HCT116 (cell line): ENCODE measurements at regions of chr2 and their contacts with region 1.

Region 1: DNA sequence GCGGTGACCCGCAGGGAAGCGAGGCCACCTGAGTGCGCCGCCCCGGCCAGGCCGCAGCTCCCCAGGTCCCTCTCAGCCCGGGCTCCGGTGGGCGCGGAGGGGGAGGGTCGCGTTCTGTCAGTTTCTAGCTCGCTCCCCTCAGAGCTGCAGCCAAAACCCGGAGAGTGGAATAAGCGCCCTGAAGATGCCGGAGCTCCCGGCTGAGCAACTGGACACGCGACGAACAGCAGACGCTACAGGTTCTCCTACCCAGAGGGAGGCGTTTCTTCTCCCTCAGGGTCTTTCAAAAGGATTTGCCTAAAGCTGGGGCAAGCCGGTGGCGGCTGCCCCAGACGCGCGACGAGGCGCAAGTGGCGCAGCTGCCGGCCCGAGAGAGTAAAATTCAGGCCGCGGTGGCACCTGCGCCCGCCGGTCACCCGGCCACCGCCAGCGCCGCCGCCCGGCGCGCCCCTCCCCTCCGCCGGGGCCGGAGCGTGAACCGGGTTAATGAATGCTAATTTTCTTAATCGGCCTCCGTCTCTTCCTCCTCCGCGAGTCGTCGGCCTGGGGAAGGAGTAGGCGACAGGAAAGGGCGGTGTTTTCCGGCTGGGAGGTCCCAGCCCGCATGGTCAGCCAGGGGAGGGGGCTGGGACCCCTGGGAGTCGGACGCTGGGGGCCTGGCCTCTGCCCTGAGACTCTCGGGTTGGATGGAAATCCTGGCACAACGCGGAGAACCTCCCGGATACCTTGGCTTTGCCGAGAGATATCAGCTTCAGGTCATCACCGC is 845 bp upstream of the CDC42EP3 start:
- DNase-seq: peak; percentile 81
- ATAC-seq: peak; percentile 52
- H3K4me3 ChIP-seq: peak overlapping the region; percentile 75 to 91
- H3K27ac ChIP-seq: peak overlapping the region; percentile 93
- H3K4me1 ChIP-seq: peaks cover 20 to 37% of the 10 kb centered on the region in 2 experiments; a peak in 3 of 4 replicates
- H3K27me3 ChIP-seq: no peaks in the 10 kb centered on the region
- CTCF ChIP-seq: no peak; a peak in 1 of 6 replicates
- POLR2A ChIP-seq: no peak
- RAD21 ChIP-seq: no peak; the same call in 1 of the 2 replicates

Region 2: DNA sequence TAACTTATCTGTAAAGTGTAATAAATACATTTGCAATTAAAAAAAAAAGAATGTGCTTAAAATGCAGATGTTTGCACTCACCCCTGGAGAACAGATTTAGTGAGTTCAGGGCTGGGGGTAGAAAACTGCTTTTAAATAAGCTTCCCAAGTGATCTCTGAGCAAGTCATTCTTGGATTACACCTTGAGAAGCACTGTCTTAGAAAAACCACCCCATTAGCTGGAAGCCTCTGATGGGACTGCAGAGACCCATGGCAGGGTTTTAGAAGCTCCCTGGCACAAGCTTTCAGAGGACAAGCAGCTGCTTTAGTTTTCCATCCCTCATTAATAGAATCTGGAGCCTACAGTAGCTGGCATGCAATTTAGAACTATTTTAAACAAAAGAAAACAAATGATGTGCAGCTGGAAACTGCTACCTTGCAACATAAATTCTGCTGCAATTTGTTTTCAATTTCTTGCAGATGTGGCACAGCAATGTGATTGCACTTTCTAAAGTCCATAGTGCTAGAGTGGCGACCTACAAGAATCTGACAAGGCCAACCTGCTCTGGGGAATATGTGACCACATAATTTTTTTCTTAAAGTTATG is 142.4 kb before region 1 on chr2:
- CTCF ChIA-PET with region 1: no interaction called
- POLR2A ChIA-PET with region 1: interaction called, 4 read pairs
- RAD21 ChIA-PET with region 1: no interaction called
- intact Hi-C with region 1: loop called (anchors 5 kb)
- DNase-seq: no peak
- ATAC-seq: no peak
- H3K4me3 ChIP-seq: no peak overlapping the region
- H3K27ac ChIP-seq: no peak overlapping the region
- H3K4me1 ChIP-seq: peaks cover 9 to 17% of the 10 kb centered on the region in 2 experiments; a peak in 3 of 4 replicates
- H3K27me3 ChIP-seq: no peaks in the 10 kb centered on the region
- CTCF ChIP-seq: no peak
- POLR2A ChIP-seq: no peak
- RAD21 ChIP-seq: no peak

Region 3: DNA sequence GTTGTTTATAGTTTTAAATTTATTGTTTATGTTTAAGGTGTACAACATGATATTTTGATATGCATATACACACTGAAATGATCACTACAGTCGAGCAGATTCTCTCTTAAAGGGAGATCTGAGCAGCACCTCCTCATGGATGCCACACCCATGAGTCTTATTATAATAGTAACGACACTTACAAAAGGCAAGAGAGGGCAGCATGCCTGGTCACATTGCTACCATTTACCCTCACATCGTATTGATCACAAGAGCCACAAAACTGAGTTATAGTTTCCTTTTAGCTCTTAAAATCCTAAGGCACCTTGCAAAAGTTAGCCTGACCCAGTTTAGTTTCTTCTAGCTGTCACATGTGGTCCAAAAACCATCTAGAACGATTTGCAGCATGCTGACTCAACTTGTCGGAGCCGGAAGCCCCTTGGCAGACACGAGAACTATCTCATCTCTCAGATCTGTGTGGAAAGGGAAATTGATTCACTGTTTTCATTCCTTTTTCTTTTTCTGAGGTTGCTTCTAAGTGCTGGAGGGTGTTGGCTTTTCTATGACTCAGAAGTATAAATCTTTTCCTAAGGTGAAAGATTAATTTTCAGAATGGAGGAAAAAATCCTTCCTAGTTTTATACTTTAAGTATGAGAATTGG is 86.2 kb before region 1 on chr2:
- CTCF ChIA-PET with region 1: no interaction called
- POLR2A ChIA-PET with region 1: no interaction called
- RAD21 ChIA-PET with region 1: no interaction called
- intact Hi-C with region 1: loop called (anchors 1 kb)
- DNase-seq: peak; percentile 78
- ATAC-seq: peak; percentile 37
- H3K4me3 ChIP-seq: peak overlapping the region in 1 of 2 experiments; percentile 23; a peak in 2 of 4 replicates
- H3K27ac ChIP-seq: peak overlapping the region; percentile 84
- H3K4me1 ChIP-seq: peaks cover 64 to 79% of the 10 kb centered on the region in 2 experiments
- H3K27me3 ChIP-seq: no peaks in the 10 kb centered on the region
- CTCF ChIP-seq: 0 out of 6 replicates have a peak, but pooled peaks of 1 of the 3 experiments have one; percentile 5
- POLR2A ChIP-seq: no peak
- RAD21 ChIP-seq: 0 out of 2 replicates have a peak, but pooled peaks have one; percentile 14

Region 4: GRCh38 chr2:37809525-37809924 is 137.2 kb after region 1 on chr2:
- CTCF ChIA-PET with region 1: no interaction called
- POLR2A ChIA-PET with region 1: no interaction called
- RAD21 ChIA-PET with region 1: no interaction called
- intact Hi-C with region 1: loop called (anchors 5 kb)
- DNase-seq: peak; percentile 12
- ATAC-seq: no peak; the same call in 1 of the 2 replicates
- H3K4me3 ChIP-seq: no peak overlapping the region
- H3K27ac ChIP-seq: no peak overlapping the region
- H3K4me1 ChIP-seq: no peaks in the 10 kb centered on the region
- H3K27me3 ChIP-seq: no peaks in the 10 kb centered on the region
- CTCF ChIP-seq: peak; percentile 60 to 74 (median 61); a peak in 5 of 6 replicates
- POLR2A ChIP-seq: no peak
- RAD21 ChIP-seq: peak; percentile 76

Region 5: DNA sequence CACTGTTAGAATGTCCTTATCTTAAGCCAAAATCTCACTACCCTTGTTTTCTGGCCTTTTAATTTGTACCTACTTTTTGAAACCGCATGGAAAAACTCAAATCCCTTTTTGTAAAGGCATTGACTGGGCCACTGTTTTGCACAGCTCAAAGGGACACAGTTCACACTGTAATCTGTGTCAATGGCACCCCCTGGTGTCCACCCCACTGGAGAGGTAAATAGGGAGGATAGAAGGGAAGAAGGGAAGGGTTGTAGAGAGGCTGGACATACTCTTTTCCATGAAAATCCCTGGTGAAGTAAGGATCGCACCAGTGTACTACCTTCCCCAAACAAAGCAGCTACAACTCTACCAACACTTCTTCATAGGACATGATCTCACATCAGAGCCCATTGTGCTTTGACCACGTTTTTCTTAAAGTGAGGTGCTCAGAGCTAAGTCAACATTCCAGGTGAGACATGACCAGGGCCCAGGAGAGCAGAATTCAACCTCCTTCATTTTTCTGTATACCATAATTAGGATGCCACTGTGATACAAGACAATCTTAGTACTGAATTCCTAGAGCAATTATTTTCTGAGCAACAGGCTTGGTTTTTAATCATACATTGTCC is 160.4 kb after region 1 on chr2:
- CTCF ChIA-PET with region 1: no interaction called
- POLR2A ChIA-PET with region 1: no interaction called
- RAD21 ChIA-PET with region 1: interaction called in 1 of 2 experiments, 5 read pairs
- intact Hi-C with region 1: loop called (anchors 5 kb)
- DNase-seq: peak; percentile 71
- ATAC-seq: peak; percentile 99
- H3K4me3 ChIP-seq: no peak overlapping the region
- H3K27ac ChIP-seq: no peak overlapping the region
- H3K4me1 ChIP-seq: peaks cover 4 to 6% of the 10 kb centered on the region in 2 experiments; a peak in 1 of 4 replicates
- H3K27me3 ChIP-seq: no peaks in the 10 kb centered on the region
- CTCF ChIP-seq: peak; percentile 84 to 94 (median 85)
- POLR2A ChIP-seq: no peak
- RAD21 ChIP-seq: peak; percentile 98